Activated naive CD4-positive, alpha-beta T cell treated with anti-CD3 and anti-CD28 coated beads for 36 hours (primary cell): ENCODE measurements at regions of chr1 and their contacts with region 1.

Region 1: GRCh38 chr1:23539698-23540266 is 8.7 kb upstream of the E2F2 start:
- DNase-seq: peak; percentile 97
- H3K4me3 Mint-ChIP-seq: peak overlapping the region; percentile 33
- H3K27ac Mint-ChIP-seq: no peak overlapping the region
- H3K4me1 Mint-ChIP-seq: peaks cover 12% of the 10 kb centered on the region
- H3K27me3 Mint-ChIP-seq: no peaks in the 10 kb centered on the region

Region 2: GRCh38 chr1:23019094-23019862 is 520.5 kb before region 1 on chr1 and contains the start of gene KDM1A:
- CTCF ChIA-PET with region 1: no interaction called
- intact Hi-C with region 1: loop called (anchors 10 kb)
- DNase-seq: peak; percentile 97
- H3K4me3 Mint-ChIP-seq: peak within 1 kb of the TSS; percentile 93
- H3K27ac Mint-ChIP-seq: peak within 1 kb of the TSS; percentile 83
- H3K4me1 Mint-ChIP-seq: peaks cover 42% of the 10 kb centered on the region
- H3K27me3 Mint-ChIP-seq: no peaks in the 10 kb centered on the region
- total RNA-seq, gene KDM1A: 59.7 to 62.6 TPM

Region 3: DNA sequence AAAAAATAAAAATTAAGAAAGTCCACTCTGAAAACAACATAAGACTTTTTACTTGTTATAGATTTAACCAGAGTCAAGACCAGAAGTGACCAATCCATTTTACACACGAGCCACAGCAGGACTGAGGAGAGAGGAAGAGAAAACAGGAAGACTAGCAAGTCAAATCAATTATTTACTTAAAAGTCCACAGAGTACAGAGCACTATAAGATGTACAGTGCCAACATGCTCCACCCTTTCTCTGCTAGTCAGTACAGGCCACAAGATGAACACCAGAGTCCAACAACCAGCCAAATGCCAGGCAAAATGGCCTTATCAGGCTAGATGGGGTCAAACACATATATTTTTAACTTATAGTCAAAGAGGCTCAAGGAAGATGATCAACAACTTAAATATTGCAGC is 390.7 kb before region 1 on chr1:
- CTCF ChIA-PET with region 1: no interaction called
- intact Hi-C with region 1: no loop called
- DNase-seq: no peak
- H3K4me3 Mint-ChIP-seq: no peak overlapping the region
- H3K27ac Mint-ChIP-seq: no peak overlapping the region
- H3K4me1 Mint-ChIP-seq: peaks cover 24% of the 10 kb centered on the region
- H3K27me3 Mint-ChIP-seq: no peaks in the 10 kb centered on the region

Region 4: GRCh38 chr1:23216771-23217420 is 322.9 kb before region 1 on chr1:
- CTCF ChIA-PET with region 1: no interaction called
- intact Hi-C with region 1: loop called (anchors 2 kb)
- DNase-seq: peak; percentile 28
- H3K4me3 Mint-ChIP-seq: peak overlapping the region; percentile 14
- H3K27ac Mint-ChIP-seq: no peak overlapping the region
- H3K4me1 Mint-ChIP-seq: peaks cover 2% of the 10 kb centered on the region
- H3K27me3 Mint-ChIP-seq: peaks cover 48% of the 10 kb centered on the region

Region 5: GRCh38 chr1:23496490-23497181 is 43.1 kb before region 1 on chr1:
- CTCF ChIA-PET with region 1: interaction called, 172 read pairs
- intact Hi-C with region 1: loop called (anchors 1 kb)
- DNase-seq: no peak
- H3K4me3 Mint-ChIP-seq: no peak overlapping the region
- H3K27ac Mint-ChIP-seq: no peak overlapping the region
- H3K4me1 Mint-ChIP-seq: no peaks in the 10 kb centered on the region
- H3K27me3 Mint-ChIP-seq: no peaks in the 10 kb centered on the region

Region 6: GRCh38 chr1:23577056-23578004 is 37.5 kb after region 1 on chr1:
- CTCF ChIA-PET with region 1: interaction called, 11 read pairs
- intact Hi-C with region 1: no loop called
- DNase-seq: peak; percentile 77
- H3K4me3 Mint-ChIP-seq: peak overlapping the region; percentile 32
- H3K27ac Mint-ChIP-seq: peak overlapping the region; percentile 78
- H3K4me1 Mint-ChIP-seq: peaks cover 29% of the 10 kb centered on the region
- H3K27me3 Mint-ChIP-seq: no peaks in the 10 kb centered on the region

Region 7: DNA sequence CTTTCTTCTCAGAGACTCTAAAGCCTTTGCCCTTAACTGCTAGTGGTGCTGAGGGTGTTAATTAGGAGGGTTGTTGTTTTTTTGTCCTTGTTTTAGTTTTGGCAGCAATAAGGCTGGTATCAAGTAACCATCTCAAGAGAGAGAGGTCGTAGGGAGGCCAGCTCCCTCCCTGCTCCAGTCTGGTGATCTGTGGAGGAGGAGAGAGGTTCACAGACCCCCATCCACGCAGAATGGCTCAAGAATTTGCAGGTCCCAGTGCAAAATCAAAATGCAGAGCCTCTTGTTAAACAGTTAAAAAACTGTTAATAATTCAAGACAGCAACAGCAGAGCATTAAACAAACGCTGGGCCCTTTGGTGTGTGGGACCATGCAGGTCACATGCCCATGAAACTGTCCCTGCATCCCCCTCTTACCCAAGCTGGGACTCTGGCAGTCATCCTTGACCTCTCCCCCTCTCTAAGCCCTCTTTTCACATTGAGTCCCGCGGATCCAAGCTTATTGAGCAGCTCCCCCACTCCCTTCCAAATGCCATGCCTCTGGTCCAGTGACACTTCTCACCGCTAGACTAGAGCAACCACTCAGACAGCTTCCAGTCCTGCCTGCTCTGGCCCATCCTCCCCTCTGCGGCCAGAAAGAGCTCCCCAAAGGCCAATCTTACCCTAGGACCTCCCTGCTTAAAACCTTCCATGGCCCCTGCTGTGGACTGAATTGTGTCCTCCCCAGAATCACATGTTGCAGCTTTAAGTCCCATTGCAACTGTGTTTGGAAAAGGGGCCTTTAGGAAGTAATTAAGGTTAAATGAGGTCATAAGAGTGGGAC is 104.2 kb after region 1 on chr1:
- CTCF ChIA-PET with region 1: interaction called, 402 read pairs
- intact Hi-C with region 1: no loop called
- DNase-seq: no peak
- H3K4me3 Mint-ChIP-seq: no peak overlapping the region
- H3K27ac Mint-ChIP-seq: no peak overlapping the region
- H3K4me1 Mint-ChIP-seq: no peaks in the 10 kb centered on the region
- H3K27me3 Mint-ChIP-seq: no peaks in the 10 kb centered on the region